HEK293T (cell line): ENCODE measurements at regions of chr14 and their contacts with region 1.

Region 1: GRCh38 chr14:49526101-49526500 is 60.1 kb downstream of the RPS29 start:
- DNase-seq: no peak

Region 2: GRCh38 chr14:50023671-50024490 is 497.8 kb after region 1 on chr14:
- CTCF ChIA-PET with region 1: interaction called, 10 read pairs
- POLR2A ChIA-PET with region 1: no interaction called
- DNase-seq: no peak